H1 (cell line): ENCODE measurements at regions of chr5 and their contacts with region 1.

Region 1: DNA sequence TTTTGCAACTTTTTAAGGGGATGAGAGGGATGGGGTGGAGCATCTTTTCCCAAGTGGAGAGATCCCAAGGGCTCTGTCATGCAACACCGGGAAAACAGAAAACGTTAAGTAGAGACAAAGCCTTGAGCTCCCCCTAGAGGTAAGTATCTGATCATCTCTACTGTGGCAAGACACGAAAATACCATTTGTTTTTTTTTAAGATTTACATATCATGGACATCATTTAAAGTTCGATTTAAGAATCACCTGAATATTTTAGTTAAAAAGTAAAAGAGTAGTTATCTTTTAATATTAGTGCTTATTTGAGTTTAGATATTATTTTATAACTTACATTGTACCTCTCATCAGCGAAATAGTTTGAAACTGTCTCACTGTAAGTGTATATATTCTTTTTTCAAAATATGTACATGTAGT is 200.4 kb downstream of the LRRC70 start:
- DNase-seq: no peak
- H3K4me3 ChIP-seq: no peak overlapping the region
- H3K27ac ChIP-seq: no peak overlapping the region
- H3K4me1 ChIP-seq: no peaks in the 10 kb centered on the region
- H3K27me3 ChIP-seq: no peaks in the 10 kb centered on the region
- CTCF ChIP-seq: peak in 2 of 3 experiments; percentile 62 to 64; a peak in 3 of 4 replicates
- EP300 ChIP-seq: no peak
- POLR2A ChIP-seq: no peak
- RAD21 ChIP-seq: peak; percentile 82 to 83

Region 2: DNA sequence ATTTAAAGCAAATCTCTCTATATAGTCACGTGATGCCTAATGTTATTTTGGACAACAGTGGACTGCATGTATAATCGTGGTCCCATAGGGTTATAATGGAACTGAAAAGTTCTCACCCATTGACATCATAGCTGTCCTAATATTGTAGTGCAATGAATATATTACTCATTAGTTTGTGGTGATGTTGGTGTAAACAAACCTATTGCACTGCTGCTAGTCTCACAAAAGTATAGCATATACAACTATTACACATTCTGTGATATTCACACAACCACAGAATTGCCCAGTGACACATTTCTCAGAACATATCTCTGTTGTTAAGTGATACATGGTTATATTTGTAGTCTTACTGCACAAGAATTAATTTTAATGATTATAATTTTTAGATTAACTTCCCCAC is 328.8 kb before region 1 on chr5:
- CTCF ChIA-PET with region 1: interaction called, 17 read pairs
- POLR2A ChIA-PET with region 1: no interaction called
- DNase-seq: no peak
- H3K4me3 ChIP-seq: no peak overlapping the region
- H3K27ac ChIP-seq: no peak overlapping the region
- H3K4me1 ChIP-seq: no peaks in the 10 kb centered on the region
- H3K27me3 ChIP-seq: no peaks in the 10 kb centered on the region
- CTCF ChIP-seq: no peak
- EP300 ChIP-seq: no peak
- POLR2A ChIP-seq: no peak
- RAD21 ChIP-seq: no peak

Region 3: GRCh38 chr5:62460578-62460983 is 318.4 kb before region 1 on chr5:
- CTCF ChIA-PET with region 1: interaction called, 23 read pairs
- POLR2A ChIA-PET with region 1: no interaction called
- DNase-seq: no peak
- H3K4me3 ChIP-seq: no peak overlapping the region
- H3K27ac ChIP-seq: no peak overlapping the region
- H3K4me1 ChIP-seq: peaks cover 0 to 4% (median 0%) of the 10 kb centered on the region in 4 experiments; a peak in 1 of 7 replicates
- H3K27me3 ChIP-seq: no peaks in the 10 kb centered on the region
- CTCF ChIP-seq: peak in 2 of 3 experiments; percentile 58 to 70; a peak in 2 of 4 replicates
- EP300 ChIP-seq: no peak
- POLR2A ChIP-seq: no peak
- RAD21 ChIP-seq: peak; percentile 78 to 80